ENCODE measurements at regions of chr3 and their contacts with region 1.

Region 1: GRCh38 chr3:11643605-11644087 is at the start of gene VGLL4:
- DNase-seq: peak; percentile 81
- H3K4me3 Mint-ChIP-seq: peak within 1 kb of the TSS; percentile 96
- H3K27ac Mint-ChIP-seq: peak within 1 kb of the TSS; percentile 97
- H3K4me1 Mint-ChIP-seq: peaks cover 27% of the 10 kb centered on the region
- H3K27me3 Mint-ChIP-seq: no peaks in the 10 kb centered on the region
- total RNA-seq, gene VGLL4: 18.2 to 18.7 TPM

Region 2: DNA sequence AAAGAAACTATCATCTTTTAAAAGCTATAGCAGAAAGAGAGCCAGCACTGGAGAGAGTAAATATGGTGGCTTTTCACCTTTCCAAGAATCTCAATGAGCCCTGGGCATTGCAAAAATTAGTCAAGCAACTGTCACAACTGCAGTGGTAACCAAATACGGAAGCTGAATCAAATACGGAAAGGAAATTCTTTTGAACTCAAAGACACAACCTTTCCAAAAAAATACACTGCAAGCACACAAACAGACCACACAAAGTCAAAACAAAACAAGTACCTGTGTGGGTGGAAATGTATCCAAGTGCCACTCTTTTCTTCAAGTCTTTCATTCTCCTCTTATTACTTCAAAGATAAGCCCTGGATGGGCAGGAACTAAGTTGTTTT is 17.6 kb before region 1 on chr3:
- CTCF ChIA-PET with region 1: interaction called, 7 read pairs
- POLR2A ChIA-PET with region 1: interaction called, 15 read pairs
- intact Hi-C with region 1: loop called (anchors 1 kb)
- DNase-seq: peak; percentile 38
- H3K4me3 Mint-ChIP-seq: no peak overlapping the region
- H3K27ac Mint-ChIP-seq: peak overlapping the region; percentile 4
- H3K4me1 Mint-ChIP-seq: peaks cover 59% of the 10 kb centered on the region
- H3K27me3 Mint-ChIP-seq: peaks cover 1% of the 10 kb centered on the region